ENCODE measurements at regions of chr12 and their contacts with region 1.

Region 1: GRCh38 chr12:10740182-10740581 is 17.1 kb upstream of the YBX3 start:
- DNase-seq: peak; percentile 79 to 86
- H3K4me3 ChIP-seq: no peak overlapping the region
- H3K27ac ChIP-seq: peak overlapping the region; percentile 74
- H3K4me1 ChIP-seq: peaks cover 25% of the 10 kb centered on the region
- H3K27me3 ChIP-seq: no peaks in the 10 kb centered on the region
- CTCF ChIP-seq: no peak

Region 2: GRCh38 chr12:10726940-10727339 is 13.2 kb before region 1 on chr12:
- CTCF ChIA-PET with region 1: no interaction called
- POLR2A ChIA-PET with region 1: interaction called, 5 read pairs
- intact Hi-C with region 1: loop called (anchors 1 kb)
- DNase-seq: peak; percentile 50 to 86
- H3K4me3 ChIP-seq: no peak overlapping the region
- H3K27ac ChIP-seq: no peak overlapping the region
- H3K4me1 ChIP-seq: peaks cover 28% of the 10 kb centered on the region
- H3K27me3 ChIP-seq: no peaks in the 10 kb centered on the region
- CTCF ChIP-seq: no peak

Region 3: DNA sequence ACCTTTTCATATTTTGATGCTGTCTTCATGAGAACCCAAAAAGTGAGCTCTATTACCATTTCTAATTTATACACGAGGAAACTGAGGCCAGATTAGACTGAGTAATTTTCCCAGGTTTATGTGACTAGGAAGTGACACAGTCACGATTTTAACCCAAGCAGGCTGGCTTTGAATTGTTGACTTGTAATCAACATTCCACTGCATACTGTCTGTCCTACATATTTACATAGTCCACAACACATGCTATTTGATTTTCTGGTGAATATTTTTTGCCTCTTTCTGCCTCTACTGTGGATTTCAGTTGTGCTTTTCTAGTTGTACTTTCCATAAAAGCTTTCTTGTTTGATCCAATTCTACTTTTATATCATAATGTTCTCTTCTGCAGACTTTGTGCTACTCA is 54.0 kb after region 1 on chr12:
- CTCF ChIA-PET with region 1: no interaction called
- POLR2A ChIA-PET with region 1: no interaction called
- intact Hi-C with region 1: no loop called
- DNase-seq: no peak
- H3K4me3 ChIP-seq: no peak overlapping the region
- H3K27ac ChIP-seq: no peak overlapping the region
- H3K4me1 ChIP-seq: no peaks in the 10 kb centered on the region
- H3K27me3 ChIP-seq: no peaks in the 10 kb centered on the region
- CTCF ChIP-seq: no peak

Region 4: GRCh38 chr12:10851243-10851858 is 111.2 kb after region 1 on chr12:
- CTCF ChIA-PET with region 1: no interaction called
- POLR2A ChIA-PET with region 1: no interaction called
- intact Hi-C with region 1: no loop called
- DNase-seq: no peak
- H3K4me3 ChIP-seq: no peak overlapping the region
- H3K27ac ChIP-seq: no peak overlapping the region
- H3K4me1 ChIP-seq: no peaks in the 10 kb centered on the region
- H3K27me3 ChIP-seq: no peaks in the 10 kb centered on the region
- CTCF ChIP-seq: no peak

Measured in PC-9 (cell line).